ENCODE measurements at regions of chr14 and their contacts with region 1.

Region 1: DNA sequence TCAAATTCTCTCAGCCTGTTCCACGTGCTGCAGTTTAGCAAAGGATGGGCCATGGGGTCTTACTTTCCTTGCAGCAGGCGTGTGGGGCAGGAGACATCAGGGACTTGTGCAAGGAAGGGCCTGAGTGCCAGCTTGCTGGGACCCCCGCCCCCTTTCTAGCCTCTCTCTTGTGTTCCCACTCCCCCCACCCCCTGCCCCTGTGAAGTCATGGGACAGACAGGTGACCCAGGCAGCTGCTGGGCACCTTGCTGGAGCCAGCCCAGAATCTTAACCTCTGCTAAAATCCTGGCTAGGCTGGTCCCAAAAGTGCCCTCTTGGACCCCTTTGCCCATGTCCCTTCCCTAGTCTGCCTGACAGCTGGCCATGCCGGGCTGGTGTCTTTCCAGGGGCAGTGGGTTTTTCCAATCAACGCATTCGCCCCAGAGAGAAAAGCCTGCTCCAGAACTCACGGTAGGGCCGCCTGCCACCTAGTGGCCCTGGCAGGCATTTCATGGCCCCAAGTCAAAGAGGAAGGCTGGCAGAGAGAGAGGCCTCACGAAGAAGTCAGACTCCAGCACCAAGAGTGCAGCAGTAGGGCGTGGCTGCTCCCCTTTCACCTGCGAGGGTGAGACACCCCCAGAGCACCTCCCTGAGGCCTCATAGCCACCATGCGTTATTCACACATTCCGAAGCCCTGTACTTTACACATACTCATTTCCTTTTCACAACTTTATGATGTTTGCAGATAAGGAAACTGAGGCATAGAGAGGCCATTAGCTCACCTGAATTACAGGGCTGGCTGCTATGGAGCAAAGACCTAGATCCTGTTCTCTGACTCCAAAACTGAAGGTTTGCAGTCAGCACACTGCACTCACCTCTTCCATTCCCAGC is 67.4 kb downstream of the LGMN start:
- DNase-seq: peak; percentile 57 to 79 (median 73)
- ATAC-seq: peak; percentile 87
- H3K4me3 ChIP-seq: no peak overlapping the region
- H3K4me3 Mint-ChIP-seq: peak overlapping the region in 4 of 10 donors; percentile 8 to 36 (median 27)
- H3K27ac ChIP-seq: peak overlapping the region; percentile 63
- H3K27ac Mint-ChIP-seq: peak overlapping the region; percentile 34 to 95 (median 86)
- H3K4me1 ChIP-seq: peaks cover 19 to 24% of the 10 kb centered on the region in 2 donors
- H3K4me1 Mint-ChIP-seq: peaks cover 15 to 41% (median 26%) of the 10 kb centered on the region in 7 donors
- H3K27me3 ChIP-seq: no peaks in the 10 kb centered on the region
- H3K27me3 Mint-ChIP-seq: no peaks in the 10 kb centered on the region

Region 2: GRCh38 chr14:92135267-92135666 is 545.7 kb before region 1 on chr14:
- CTCF ChIA-PET with region 1: no interaction called
- POLR2A ChIA-PET with region 1: no interaction called
- intact Hi-C with region 1: loop called (anchors 1 to 2 kb)
- DNase-seq: peak in 5 of 9 donors; percentile 10 to 37 (median 27)
- ATAC-seq: no peak
- H3K4me3 ChIP-seq: no peak overlapping the region
- H3K4me3 Mint-ChIP-seq: no peak overlapping the region
- H3K27ac ChIP-seq: no peak overlapping the region
- H3K27ac Mint-ChIP-seq: no peak overlapping the region
- H3K4me1 ChIP-seq: no peaks in the 10 kb centered on the region
- H3K4me1 Mint-ChIP-seq: peaks cover 5 to 19% (median 14%) of the 10 kb centered on the region in 7 donors
- H3K27me3 ChIP-seq: no peaks in the 10 kb centered on the region
- H3K27me3 Mint-ChIP-seq: no peaks in the 10 kb centered on the region

Region 3: GRCh38 chr14:92513204-92513973 is 167.6 kb before region 1 on chr14 and contains the start of gene RIN3:
- CTCF ChIA-PET with region 1: no interaction called
- POLR2A ChIA-PET with region 1: no interaction called
- intact Hi-C with region 1: loop called (anchors 5 kb)
- DNase-seq: peak in 8 of 9 donors; percentile 17 to 43 (median 38)
- ATAC-seq: peak; percentile 71
- H3K4me3 ChIP-seq: peak within 1 kb of the TSS; percentile 76
- H3K4me3 Mint-ChIP-seq: peak within 1 kb of the TSS; percentile 48 to 86 (median 76)
- H3K27ac ChIP-seq: peak within 1 kb of the TSS; percentile 67
- H3K27ac Mint-ChIP-seq: peak within 1 kb of the TSS in 8 of 9 donors; percentile 14 to 71 (median 56)
- H3K4me1 ChIP-seq: peaks cover 25 to 44% of the 10 kb centered on the region in 2 donors
- H3K4me1 Mint-ChIP-seq: peaks cover 21 to 48% (median 34%) of the 10 kb centered on the region in 7 donors
- H3K27me3 ChIP-seq: no peaks in the 10 kb centered on the region
- H3K27me3 Mint-ChIP-seq: peaks cover 0 to 62% (median 0%) of the 10 kb centered on the region in 5 donors
- total RNA-seq, gene RIN3: 45.4 to 182 (median 132) TPM

Region 4: DNA sequence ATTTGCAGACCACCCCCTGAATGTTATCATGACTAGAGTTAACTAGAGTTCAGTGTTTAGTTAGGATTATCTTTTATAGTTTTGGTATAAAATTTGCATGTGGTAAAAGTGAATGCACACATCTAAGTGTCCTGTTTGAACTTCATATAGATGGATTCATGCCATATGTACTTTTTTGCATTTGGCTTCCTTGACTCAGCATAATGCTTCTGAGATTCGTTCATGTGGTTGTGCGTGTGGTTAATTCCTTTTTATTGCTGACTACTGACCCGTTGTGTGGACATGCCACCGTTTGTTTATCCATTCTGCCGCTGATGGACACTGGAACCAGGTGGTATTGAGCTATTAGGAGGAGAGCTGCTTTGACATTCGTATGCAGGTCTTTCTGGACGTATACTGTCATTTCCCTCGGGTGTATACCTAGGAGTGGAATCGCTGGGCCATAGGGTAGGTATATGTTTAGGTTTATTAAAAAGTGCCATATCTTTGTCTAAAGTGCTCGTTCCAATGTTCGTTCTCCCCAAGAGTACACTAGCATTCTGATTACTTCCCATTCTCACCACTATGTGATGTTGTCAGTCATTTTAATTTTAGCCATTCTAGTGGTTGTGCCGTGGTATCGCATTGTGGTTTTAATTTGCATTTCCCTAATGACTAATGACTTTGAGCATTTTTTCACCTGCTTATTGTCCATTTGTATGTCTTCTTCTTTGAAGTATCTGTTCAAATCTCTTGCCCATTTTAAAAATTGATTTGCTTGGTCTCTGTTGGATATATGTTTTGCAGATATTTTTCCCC is 129.8 kb before region 1 on chr14:
- CTCF ChIA-PET with region 1: interaction called, 5 read pairs
- POLR2A ChIA-PET with region 1: interaction called, 3 read pairs
- intact Hi-C with region 1: loop called (anchors 2 to 5 kb)
- DNase-seq: no peak
- ATAC-seq: peak; percentile 59
- H3K4me3 ChIP-seq: no peak overlapping the region
- H3K4me3 Mint-ChIP-seq: no peak overlapping the region
- H3K27ac ChIP-seq: no peak overlapping the region
- H3K27ac Mint-ChIP-seq: peak overlapping the region in 3 of 9 donors; percentile 1 to 51 (median 50)
- H3K4me1 ChIP-seq: peaks cover 19 to 20% of the 10 kb centered on the region in 2 donors
- H3K4me1 Mint-ChIP-seq: peaks cover 27 to 54% (median 41%) of the 10 kb centered on the region in 7 donors
- H3K27me3 ChIP-seq: no peaks in the 10 kb centered on the region
- H3K27me3 Mint-ChIP-seq: peaks cover 0 to 10% (median 0%) of the 10 kb centered on the region in 5 donors

Region 5: DNA sequence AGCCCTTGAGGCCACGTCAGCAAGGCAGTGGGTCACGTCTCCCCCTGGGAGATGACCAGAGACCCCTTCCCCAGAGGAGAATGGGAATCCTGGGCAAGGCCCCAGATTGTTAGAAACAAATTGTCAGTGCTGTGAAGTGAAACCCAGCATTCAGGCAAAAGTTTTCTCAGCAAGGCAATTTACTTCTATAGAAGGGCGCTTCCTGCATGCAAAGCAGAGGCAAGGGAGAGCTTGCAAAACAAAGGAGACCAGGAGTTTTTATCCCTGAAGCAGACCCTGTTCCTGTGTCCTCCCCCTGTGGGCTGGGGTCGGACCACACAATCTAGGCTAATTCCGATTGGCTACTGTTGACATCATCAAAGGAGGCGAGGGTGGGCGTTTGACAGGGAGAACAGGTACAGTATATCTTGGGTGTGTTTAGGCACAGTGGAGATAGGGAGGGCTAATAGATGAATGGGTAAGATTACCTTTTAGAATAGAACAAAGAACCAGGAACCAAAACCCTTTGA is 53.3 kb before region 1 on chr14:
- CTCF ChIA-PET with region 1: no interaction called
- POLR2A ChIA-PET with region 1: no interaction called
- intact Hi-C with region 1: no loop called
- DNase-seq: no peak
- ATAC-seq: no peak
- H3K4me3 ChIP-seq: no peak overlapping the region
- H3K4me3 Mint-ChIP-seq: no peak overlapping the region
- H3K27ac ChIP-seq: no peak overlapping the region
- H3K27ac Mint-ChIP-seq: peak overlapping the region in 3 of 9 donors; percentile 38 to 69 (median 61)
- H3K4me1 ChIP-seq: no peaks in the 10 kb centered on the region
- H3K4me1 Mint-ChIP-seq: peaks cover 0 to 17% (median 4%) of the 10 kb centered on the region in 7 donors
- H3K27me3 ChIP-seq: no peaks in the 10 kb centered on the region
- H3K27me3 Mint-ChIP-seq: no peaks in the 10 kb centered on the region

Region 6: DNA sequence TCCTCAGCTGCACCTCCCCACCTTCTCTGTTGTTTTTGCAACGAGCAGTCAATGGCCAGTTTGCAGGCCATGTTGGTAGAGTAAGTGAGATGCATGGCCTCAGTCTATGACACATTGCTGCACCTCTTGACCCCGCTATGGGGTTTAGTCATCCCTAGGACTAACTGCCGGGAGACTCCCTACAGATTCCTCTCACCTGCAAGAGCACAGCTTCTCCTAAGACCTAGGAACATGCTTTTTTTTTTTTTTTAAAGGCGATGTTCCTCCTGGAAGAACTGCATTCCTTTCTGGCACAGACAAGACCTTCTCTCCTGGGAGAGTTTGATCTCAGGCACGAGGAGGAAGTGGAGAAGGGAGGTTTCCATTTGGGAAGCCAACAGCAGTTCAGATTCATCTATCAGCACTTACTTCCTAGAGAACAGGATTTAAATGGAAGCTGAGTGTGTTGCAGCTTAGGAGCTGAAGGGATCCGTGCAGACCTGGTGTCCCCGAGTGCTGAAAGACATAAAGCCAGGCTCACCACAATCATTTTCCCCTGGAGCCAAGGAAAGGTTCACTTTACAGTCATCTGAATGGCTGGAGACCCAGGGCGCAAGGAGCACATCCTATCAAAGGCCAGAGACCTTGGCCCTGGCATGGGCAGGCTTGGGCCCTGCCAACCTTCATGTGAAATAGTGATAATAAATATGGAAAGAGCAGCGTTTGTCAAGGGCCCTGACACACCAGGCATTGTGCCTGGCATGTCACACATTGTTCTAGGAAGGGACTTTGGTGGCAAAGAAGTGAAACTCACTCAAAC is 36.6 kb before region 1 on chr14:
- CTCF ChIA-PET with region 1: no interaction called
- POLR2A ChIA-PET with region 1: no interaction called
- intact Hi-C with region 1: no loop called
- DNase-seq: no peak
- ATAC-seq: no peak
- H3K4me3 ChIP-seq: no peak overlapping the region
- H3K4me3 Mint-ChIP-seq: peak overlapping the region in 2 of 10 donors; percentile 18 to 56
- H3K27ac ChIP-seq: no peak overlapping the region
- H3K27ac Mint-ChIP-seq: peak overlapping the region in 4 of 9 donors; percentile 17 to 99 (median 98)
- H3K4me1 ChIP-seq: peaks cover 7 to 47% of the 10 kb centered on the region in 2 donors
- H3K4me1 Mint-ChIP-seq: peaks cover 38 to 56% (median 42%) of the 10 kb centered on the region in 7 donors
- H3K27me3 ChIP-seq: no peaks in the 10 kb centered on the region
- H3K27me3 Mint-ChIP-seq: no peaks in the 10 kb centered on the region